ENCODE measurements at regions of chr1 and their contacts with region 1.

Region 1: DNA sequence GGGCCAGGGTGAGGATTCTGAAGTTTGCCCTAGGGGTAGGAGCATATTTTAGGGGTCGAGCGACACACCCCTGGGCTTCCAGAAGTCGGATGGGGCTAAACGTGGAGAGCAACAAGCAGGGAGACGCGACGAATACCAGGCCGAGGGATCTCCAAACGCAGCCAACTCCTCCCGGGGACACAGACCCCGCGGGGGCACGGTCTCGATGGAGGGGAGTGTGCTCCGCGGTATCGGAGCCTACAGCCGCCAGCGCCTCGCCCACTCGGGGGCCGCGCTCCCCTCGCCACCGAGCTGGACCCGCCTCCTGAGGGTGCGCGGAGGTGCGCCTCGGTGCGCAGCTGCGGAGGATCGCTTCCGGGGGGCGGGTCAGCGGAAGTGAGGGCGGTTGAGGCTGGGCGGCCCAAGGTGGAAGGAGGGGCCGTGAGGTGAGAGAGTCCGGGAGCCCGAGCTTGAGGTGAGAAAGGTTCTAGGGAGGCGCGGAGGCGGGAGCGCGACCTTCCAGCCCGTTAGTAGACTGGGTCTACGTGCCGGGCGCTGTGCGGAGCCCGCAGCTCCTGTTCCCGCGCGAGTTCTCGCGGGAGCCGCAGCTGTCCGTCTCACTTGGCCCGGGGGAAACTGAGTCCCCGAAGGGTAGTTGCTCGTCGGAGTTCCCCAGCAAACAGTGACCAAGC is at the start of gene MTFR1L:
- DNase-seq: peak; percentile 82 to 96 (median 92)
- ATAC-seq: peak; percentile 92
- H3K4me3 ChIP-seq: peak within 1 kb of the TSS; percentile 97
- H3K4me3 Mint-ChIP-seq: peak within 1 kb of the TSS; percentile 91 to 100 (median 96)
- H3K27ac ChIP-seq: peak within 1 kb of the TSS; percentile 91
- H3K27ac Mint-ChIP-seq: peak within 1 kb of the TSS; percentile 92 to 99 (median 96)
- H3K4me1 ChIP-seq: peaks cover 19 to 28% of the 10 kb centered on the region in 2 donors
- H3K4me1 Mint-ChIP-seq: peaks cover 30 to 61% (median 46%) of the 10 kb centered on the region in 7 donors
- H3K27me3 ChIP-seq: no peaks in the 10 kb centered on the region
- H3K27me3 Mint-ChIP-seq: no peaks in the 10 kb centered on the region
- total RNA-seq, gene MTFR1L: 39.6 to 60.2 (median 42.3) TPM

Region 2: GRCh38 chr1:25239681-25240541 is 579.8 kb before region 1 on chr1:
- CTCF ChIA-PET with region 1: no interaction called
- POLR2A ChIA-PET with region 1: interaction called, 4 read pairs
- intact Hi-C with region 1: loop called in 1 of 2 experiments (anchors 10 kb)
- DNase-seq: peak; percentile 72 to 91 (median 79)
- ATAC-seq: peak; percentile 92
- H3K4me3 ChIP-seq: peak overlapping the region; percentile 28
- H3K4me3 Mint-ChIP-seq: peak overlapping the region; percentile 87 to 93 (median 91)
- H3K27ac ChIP-seq: peak overlapping the region; percentile 80
- H3K27ac Mint-ChIP-seq: peak overlapping the region; percentile 89 to 98 (median 97)
- H3K4me1 ChIP-seq: peaks cover 33 to 37% of the 10 kb centered on the region in 2 donors
- H3K4me1 Mint-ChIP-seq: peaks cover 23 to 74% (median 63%) of the 10 kb centered on the region in 7 donors
- H3K27me3 ChIP-seq: no peaks in the 10 kb centered on the region
- H3K27me3 Mint-ChIP-seq: no peaks in the 10 kb centered on the region

Region 3: DNA sequence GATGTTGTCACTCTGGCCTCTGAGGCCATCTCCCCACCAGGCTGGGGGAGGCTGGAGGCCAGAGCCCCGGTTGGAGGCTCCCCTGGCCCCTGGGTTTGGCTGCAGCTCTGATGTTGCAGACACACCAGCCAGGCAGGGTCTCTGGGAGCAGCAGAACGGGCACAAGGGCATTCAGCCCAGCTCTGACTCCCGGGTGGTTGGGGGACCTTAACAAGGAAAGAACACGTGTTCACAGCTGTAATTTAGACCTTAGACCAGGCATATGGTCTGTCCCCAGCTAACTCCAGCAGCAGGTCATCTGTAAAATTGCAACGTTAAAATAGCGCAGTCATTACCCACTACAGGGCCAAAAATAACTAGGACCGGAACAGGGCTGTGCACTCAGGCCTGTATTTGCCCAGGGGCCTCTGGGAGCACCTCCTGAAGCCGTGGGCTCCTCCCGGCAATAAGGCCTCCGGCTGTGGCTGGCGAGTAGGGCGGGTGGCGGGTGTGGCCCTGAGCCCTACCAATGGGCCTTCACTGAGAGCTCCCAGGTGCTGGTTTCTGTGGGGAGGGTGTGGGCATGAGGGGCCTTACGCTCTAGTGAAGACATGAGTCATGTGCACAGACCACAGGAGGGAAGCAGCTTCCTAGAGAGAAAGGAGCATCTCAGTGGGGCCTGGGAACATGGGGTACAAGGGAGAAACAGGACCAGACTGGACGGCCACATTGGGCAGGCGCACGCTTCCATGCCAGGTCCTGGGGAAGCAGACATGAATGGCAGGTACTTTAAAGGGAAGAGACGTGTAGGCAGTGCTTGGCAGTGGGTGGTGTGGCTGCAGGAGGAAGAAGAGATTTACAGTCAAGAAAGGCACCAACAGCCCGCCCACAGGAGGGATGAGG is 270.2 kb before region 1 on chr1:
- CTCF ChIA-PET with region 1: no interaction called
- POLR2A ChIA-PET with region 1: interaction called, 11 read pairs
- intact Hi-C with region 1: no loop called
- DNase-seq: peak in 8 of 9 donors; percentile 54 to 81 (median 66)
- ATAC-seq: peak; percentile 96
- H3K4me3 ChIP-seq: peak overlapping the region; percentile 48
- H3K4me3 Mint-ChIP-seq: peak overlapping the region; percentile 74 to 87 (median 85)
- H3K27ac ChIP-seq: peak overlapping the region; percentile 77
- H3K27ac Mint-ChIP-seq: peak overlapping the region; percentile 89 to 98 (median 96)
- H3K4me1 ChIP-seq: peaks cover 77 to 94% of the 10 kb centered on the region in 2 donors
- H3K4me1 Mint-ChIP-seq: peaks cover 62 to 100% (median 92%) of the 10 kb centered on the region in 7 donors
- H3K27me3 ChIP-seq: no peaks in the 10 kb centered on the region
- H3K27me3 Mint-ChIP-seq: peaks cover 0 to 1% (median 0%) of the 10 kb centered on the region in 5 donors

Region 4: GRCh38 chr1:25774921-25775801 is 44.5 kb before region 1 on chr1:
- CTCF ChIA-PET with region 1: no interaction called
- POLR2A ChIA-PET with region 1: interaction called, 21 read pairs
- intact Hi-C with region 1: loop called in 1 of 2 experiments (anchors 2 kb)
- DNase-seq: peak; percentile 53 to 97 (median 95)
- ATAC-seq: peak; percentile 92
- H3K4me3 ChIP-seq: peak overlapping the region; percentile 49
- H3K4me3 Mint-ChIP-seq: peak overlapping the region; percentile 71 to 91 (median 84)
- H3K27ac ChIP-seq: peak overlapping the region; percentile 77
- H3K27ac Mint-ChIP-seq: peak overlapping the region; percentile 79 to 99 (median 97)
- H3K4me1 ChIP-seq: peaks cover 35 to 78% of the 10 kb centered on the region in 2 donors
- H3K4me1 Mint-ChIP-seq: peaks cover 52 to 96% (median 86%) of the 10 kb centered on the region in 7 donors
- H3K27me3 ChIP-seq: no peaks in the 10 kb centered on the region
- H3K27me3 Mint-ChIP-seq: peaks cover 0 to 45% (median 0%) of the 10 kb centered on the region in 5 donors

Region 5: DNA sequence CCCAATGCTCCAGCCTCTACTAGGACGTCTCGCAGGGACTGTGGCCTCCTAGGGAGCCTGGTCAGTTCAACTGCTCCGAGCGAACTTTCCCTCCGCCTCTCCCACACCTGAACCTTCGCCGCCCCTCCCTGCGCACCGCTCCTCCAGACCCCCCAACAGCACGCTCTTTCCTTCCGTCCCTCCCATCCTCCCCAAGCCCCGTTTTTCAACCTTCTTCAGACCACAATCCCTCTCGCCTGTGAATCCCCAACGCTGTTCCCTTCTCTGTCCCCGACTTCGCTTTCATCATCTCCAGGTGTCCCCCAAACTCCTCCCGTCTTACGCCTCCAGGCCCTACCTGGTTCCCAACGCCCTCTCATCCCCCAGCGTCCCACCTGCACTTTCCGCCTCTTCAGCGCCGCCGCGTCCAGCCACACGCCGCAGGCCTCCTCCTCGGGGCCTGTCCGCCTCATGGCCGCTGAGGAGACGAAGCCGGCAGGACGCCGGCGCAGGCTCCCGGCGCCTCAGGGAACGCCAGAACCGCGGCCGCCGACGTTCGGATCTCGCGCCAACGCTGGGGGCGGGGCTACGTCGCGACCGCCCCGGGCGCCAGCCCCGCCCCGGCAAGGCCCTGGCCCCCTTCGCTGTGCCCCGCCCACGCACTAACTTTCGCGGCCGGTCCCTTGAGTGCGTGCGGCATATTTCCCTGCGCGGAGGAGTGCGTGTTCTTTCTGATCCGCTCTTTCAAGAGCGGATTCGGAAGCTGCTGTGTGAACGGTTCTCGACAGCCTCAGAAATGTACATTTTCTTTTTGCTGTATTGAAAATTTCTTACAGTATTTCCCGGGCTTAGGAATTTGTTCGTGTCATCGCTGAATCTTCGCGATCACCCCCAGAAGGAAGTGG is 39.4 kb after region 1 on chr1 and contains the start of gene AUNIP:
- CTCF ChIA-PET with region 1: interaction called, 3 read pairs
- POLR2A ChIA-PET with region 1: interaction called, 6 read pairs
- intact Hi-C with region 1: loop called (anchors 1 kb)
- DNase-seq: peak; percentile 84 to 95 (median 90)
- ATAC-seq: peak; percentile 100
- H3K4me3 ChIP-seq: peak within 1 kb of the TSS; percentile 78
- H3K4me3 Mint-ChIP-seq: peak within 1 kb of the TSS; percentile 87 to 99 (median 94)
- H3K27ac ChIP-seq: peak within 1 kb of the TSS; percentile 77
- H3K27ac Mint-ChIP-seq: peak within 1 kb of the TSS; percentile 83 to 97 (median 95)
- H3K4me1 ChIP-seq: peaks cover 9 to 10% of the 10 kb centered on the region in 2 donors
- H3K4me1 Mint-ChIP-seq: peaks cover 0 to 32% (median 24%) of the 10 kb centered on the region in 7 donors
- H3K27me3 ChIP-seq: no peaks in the 10 kb centered on the region
- H3K27me3 Mint-ChIP-seq: no peaks in the 10 kb centered on the region
- total RNA-seq, gene AUNIP: 0.83 to 4.3 TPM in 2 of 5 experiments, not detected in the others

Region 6: DNA sequence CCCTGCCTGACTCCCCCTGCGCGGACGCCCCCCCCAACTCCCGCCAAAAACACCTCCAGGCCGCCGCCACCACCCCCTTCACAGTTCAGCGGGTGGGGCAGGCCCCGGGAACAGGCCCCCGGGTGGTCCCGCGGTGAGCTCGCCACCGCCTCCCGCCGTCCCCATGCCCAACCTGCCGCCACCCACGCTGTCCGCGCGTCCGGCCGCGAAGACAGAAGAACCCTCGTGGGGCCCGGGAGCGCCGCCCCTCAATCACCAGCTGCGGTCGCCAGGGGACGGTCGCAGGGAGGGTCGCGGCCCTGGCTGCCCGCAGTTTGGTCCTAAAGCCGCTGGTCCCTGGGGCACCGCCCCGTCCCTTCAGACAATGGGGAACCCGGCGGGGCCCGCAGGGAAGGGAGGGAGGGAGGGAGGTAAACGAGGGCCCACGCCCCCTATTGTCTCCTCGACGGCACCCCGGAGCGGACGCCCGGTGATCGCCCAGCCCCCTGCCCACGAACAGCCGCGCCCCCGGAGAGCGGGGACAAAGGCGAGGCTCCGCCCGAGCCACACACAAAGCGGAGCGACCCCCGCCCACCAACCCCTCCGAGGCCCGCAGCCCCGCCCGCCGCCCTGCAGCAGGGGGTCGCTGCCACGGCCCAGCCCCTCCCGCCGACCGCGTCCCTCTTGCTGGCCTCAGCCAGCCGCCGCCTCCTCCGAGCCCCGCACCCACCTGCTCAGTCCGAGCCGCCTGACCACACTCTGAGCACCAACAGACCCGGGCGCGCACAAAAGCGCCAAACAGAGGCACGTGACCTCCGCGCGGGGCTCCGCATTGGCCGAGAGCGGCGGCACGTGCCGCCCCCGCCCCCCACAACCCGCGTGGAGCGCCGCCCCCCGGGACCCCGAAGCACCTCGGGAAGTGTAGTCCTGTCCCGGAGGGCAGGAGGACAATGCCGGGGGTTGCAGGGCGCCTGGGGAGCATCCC is 86.3 kb after region 1 on chr1 and contains the start of gene STMN1:
- CTCF ChIA-PET with region 1: no interaction called
- POLR2A ChIA-PET with region 1: interaction called, 4 read pairs
- intact Hi-C with region 1: loop called (anchors 1 kb)
- DNase-seq: peak; percentile 62 to 86 (median 79)
- ATAC-seq: peak; percentile 83
- H3K4me3 ChIP-seq: peak within 1 kb of the TSS; percentile 77
- H3K4me3 Mint-ChIP-seq: peak within 1 kb of the TSS; percentile 88 to 98 (median 93)
- H3K27ac ChIP-seq: peak within 1 kb of the TSS; percentile 79
- H3K27ac Mint-ChIP-seq: peak within 1 kb of the TSS; percentile 86 to 97 (median 94)
- H3K4me1 ChIP-seq: peaks cover 8 to 11% of the 10 kb centered on the region in 2 donors
- H3K4me1 Mint-ChIP-seq: peaks cover 11 to 34% (median 22%) of the 10 kb centered on the region in 7 donors
- H3K27me3 ChIP-seq: no peaks in the 10 kb centered on the region
- H3K27me3 Mint-ChIP-seq: peaks cover 0 to 32% (median 0%) of the 10 kb centered on the region in 5 donors
- total RNA-seq, gene STMN1: 29.3 to 347 (median 75.3) TPM

Region 7: GRCh38 chr1:26233903-26234643 is 414.4 kb after region 1 on chr1 and contains the start of gene CEP85:
- CTCF ChIA-PET with region 1: no interaction called
- POLR2A ChIA-PET with region 1: no interaction called
- intact Hi-C with region 1: no loop called
- DNase-seq: peak; percentile 93 to 99 (median 98)
- ATAC-seq: peak; percentile 96
- H3K4me3 ChIP-seq: peak within 1 kb of the TSS; percentile 91
- H3K4me3 Mint-ChIP-seq: peak within 1 kb of the TSS; percentile 89 to 99 (median 99)
- H3K27ac ChIP-seq: peak within 1 kb of the TSS; percentile 93
- H3K27ac Mint-ChIP-seq: peak within 1 kb of the TSS; percentile 87 to 99 (median 96)
- H3K4me1 ChIP-seq: peaks cover 4 to 13% of the 10 kb centered on the region in 2 donors
- H3K4me1 Mint-ChIP-seq: peaks cover 26 to 39% (median 38%) of the 10 kb centered on the region in 7 donors
- H3K27me3 ChIP-seq: no peaks in the 10 kb centered on the region
- H3K27me3 Mint-ChIP-seq: peaks cover 0 to 8% (median 0%) of the 10 kb centered on the region in 5 donors
- total RNA-seq, gene CEP85: 12.1 to 34.8 (median 20.7) TPM